Activated naive CD4-positive, alpha-beta T cell treated with anti-CD3 and anti-CD28 coated beads for 36 hours (primary cell): ENCODE measurements at regions of chr7 and their contacts with region 1.

Region 1: GRCh38 chr7:27150568-27151340 is 1.6 kb downstream of the HOXA3 start:
- DNase-seq: peak; percentile 67
- H3K4me3 Mint-ChIP-seq: peak overlapping the region; percentile 64
- H3K27ac Mint-ChIP-seq: no peak overlapping the region
- H3K4me1 Mint-ChIP-seq: peaks cover 38% of the 10 kb centered on the region
- H3K27me3 Mint-ChIP-seq: peaks cover 87% of the 10 kb centered on the region

Region 2: GRCh38 chr7:25862260-25863037 is 1288.3 kb before region 1 on chr7:
- CTCF ChIA-PET with region 1: no interaction called
- intact Hi-C with region 1: loop called (anchors 5 kb)
- DNase-seq: peak; percentile 99
- H3K4me3 Mint-ChIP-seq: peak overlapping the region; percentile 58
- H3K27ac Mint-ChIP-seq: peak overlapping the region; percentile 38
- H3K4me1 Mint-ChIP-seq: peaks cover 22% of the 10 kb centered on the region
- H3K27me3 Mint-ChIP-seq: peaks cover 70% of the 10 kb centered on the region

Region 3: GRCh38 chr7:26868841-26869505 is 281.8 kb before region 1 on chr7:
- CTCF ChIA-PET with region 1: no interaction called
- intact Hi-C with region 1: no loop called
- DNase-seq: no peak
- H3K4me3 Mint-ChIP-seq: no peak overlapping the region
- H3K27ac Mint-ChIP-seq: no peak overlapping the region
- H3K4me1 Mint-ChIP-seq: peaks cover 7% of the 10 kb centered on the region
- H3K27me3 Mint-ChIP-seq: peaks cover 36% of the 10 kb centered on the region

Region 4: GRCh38 chr7:27095897-27096767 is 54.6 kb before region 1 on chr7 and contains the start of gene HOXA1:
- CTCF ChIA-PET with region 1: interaction called, 3 read pairs
- intact Hi-C with region 1: loop called (anchors 1 kb)
- DNase-seq: peak; percentile 82
- H3K4me3 Mint-ChIP-seq: peak within 1 kb of the TSS; percentile 80
- H3K27ac Mint-ChIP-seq: peak within 1 kb of the TSS; percentile 47
- H3K4me1 Mint-ChIP-seq: peaks cover 21% of the 10 kb centered on the region
- H3K27me3 Mint-ChIP-seq: peaks cover 82% of the 10 kb centered on the region
- total RNA-seq, gene HOXA1: 0.24 to 0.30 TPM

Region 5: GRCh38 chr7:27134392-27134791 is 16.4 kb before region 1 on chr7:
- CTCF ChIA-PET with region 1: interaction called, 8 read pairs
- intact Hi-C with region 1: loop called (anchors 1 kb)
- DNase-seq: peak; percentile 64
- H3K4me3 Mint-ChIP-seq: no peak overlapping the region
- H3K27ac Mint-ChIP-seq: peak overlapping the region; percentile 51
- H3K4me1 Mint-ChIP-seq: peaks cover 19% of the 10 kb centered on the region
- H3K27me3 Mint-ChIP-seq: peaks cover 54% of the 10 kb centered on the region

Region 6: GRCh38 chr7:27172823-27173510 is 22.2 kb after region 1 on chr7:
- CTCF ChIA-PET with region 1: interaction called, 9 read pairs
- intact Hi-C with region 1: loop called (anchors 1 kb)
- DNase-seq: no peak
- H3K4me3 Mint-ChIP-seq: no peak overlapping the region
- H3K27ac Mint-ChIP-seq: no peak overlapping the region
- H3K4me1 Mint-ChIP-seq: peaks cover 25% of the 10 kb centered on the region
- H3K27me3 Mint-ChIP-seq: peaks cover 66% of the 10 kb centered on the region

Region 7: GRCh38 chr7:27179503-27180430 is 29.0 kb after region 1 on chr7:
- CTCF ChIA-PET with region 1: interaction called, 11 read pairs
- intact Hi-C with region 1: no loop called
- DNase-seq: peak; percentile 57
- H3K4me3 Mint-ChIP-seq: peak overlapping the region; percentile 4
- H3K27ac Mint-ChIP-seq: no peak overlapping the region
- H3K4me1 Mint-ChIP-seq: peaks cover 8% of the 10 kb centered on the region
- H3K27me3 Mint-ChIP-seq: peaks cover 72% of the 10 kb centered on the region

Region 8: DNA sequence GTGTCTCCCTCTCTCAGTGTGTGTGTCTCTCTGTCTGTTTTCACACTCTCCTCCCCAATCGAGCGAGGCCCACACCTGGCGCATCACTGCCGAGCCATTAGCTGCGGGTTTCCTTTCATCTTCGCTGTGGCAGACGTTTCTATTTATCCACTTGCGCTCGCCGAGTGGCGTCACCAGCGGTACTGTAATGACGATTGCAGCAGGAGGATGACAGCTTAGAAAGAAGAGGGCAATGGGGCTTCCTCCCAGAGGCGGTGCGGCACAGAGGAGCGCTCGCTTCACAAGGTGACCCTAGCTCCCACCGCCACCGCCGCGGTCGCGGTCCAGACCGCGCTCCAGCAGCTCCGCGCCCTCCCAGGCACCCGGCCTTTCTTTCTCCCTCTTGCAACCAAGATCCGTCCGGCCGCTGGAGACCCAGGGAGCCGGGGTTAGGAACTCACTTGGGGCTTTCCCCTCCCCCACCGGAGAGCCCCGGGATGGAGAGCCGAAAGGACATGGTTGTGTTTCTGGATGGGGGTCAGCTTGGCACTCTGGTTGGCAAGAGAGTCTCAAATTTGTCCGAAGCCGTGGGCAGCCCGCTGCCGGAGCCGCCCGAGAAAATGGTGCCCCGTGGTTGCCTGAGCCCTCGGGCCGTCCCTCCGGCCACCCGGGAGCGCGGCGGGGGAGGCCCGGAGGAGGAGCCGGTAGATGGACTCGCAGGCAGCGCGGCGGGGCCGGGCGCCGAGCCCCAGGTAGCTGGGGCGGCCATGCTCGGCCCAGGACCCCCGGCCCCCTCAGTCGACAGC is 92.0 kb after region 1 on chr7 and contains the start of gene EVX1:
- CTCF ChIA-PET with region 1: interaction called, 3 read pairs
- intact Hi-C with region 1: loop called (anchors 5 kb)
- DNase-seq: peak; percentile 78
- H3K4me3 Mint-ChIP-seq: peak within 1 kb of the TSS; percentile 58
- H3K27ac Mint-ChIP-seq: no peak within 1 kb of the TSS
- H3K4me1 Mint-ChIP-seq: peaks cover 25% of the 10 kb centered on the region
- H3K27me3 Mint-ChIP-seq: peaks cover 79% of the 10 kb centered on the region
- total RNA-seq, gene EVX1: not detected